Psoas muscle (tissue), 8 donors: ENCODE measurements at regions of chr19 and their contacts with region 1.

Region 1: GRCh38 chr19:44689056-44689895 is 9.7 kb upstream of the CEACAM16 start:
- DNase-seq: peak; percentile 73 to 86
- ATAC-seq: peak; percentile 59 to 77 (median 67)
- H3K4me3 ChIP-seq: no peak overlapping the region
- H3K27ac ChIP-seq: no peak overlapping the region
- H3K4me1 ChIP-seq: peaks cover 3% of the 10 kb centered on the region
- H3K27me3 ChIP-seq: no peaks in the 10 kb centered on the region
- CTCF ChIP-seq: peak; percentile 88

Region 2: DNA sequence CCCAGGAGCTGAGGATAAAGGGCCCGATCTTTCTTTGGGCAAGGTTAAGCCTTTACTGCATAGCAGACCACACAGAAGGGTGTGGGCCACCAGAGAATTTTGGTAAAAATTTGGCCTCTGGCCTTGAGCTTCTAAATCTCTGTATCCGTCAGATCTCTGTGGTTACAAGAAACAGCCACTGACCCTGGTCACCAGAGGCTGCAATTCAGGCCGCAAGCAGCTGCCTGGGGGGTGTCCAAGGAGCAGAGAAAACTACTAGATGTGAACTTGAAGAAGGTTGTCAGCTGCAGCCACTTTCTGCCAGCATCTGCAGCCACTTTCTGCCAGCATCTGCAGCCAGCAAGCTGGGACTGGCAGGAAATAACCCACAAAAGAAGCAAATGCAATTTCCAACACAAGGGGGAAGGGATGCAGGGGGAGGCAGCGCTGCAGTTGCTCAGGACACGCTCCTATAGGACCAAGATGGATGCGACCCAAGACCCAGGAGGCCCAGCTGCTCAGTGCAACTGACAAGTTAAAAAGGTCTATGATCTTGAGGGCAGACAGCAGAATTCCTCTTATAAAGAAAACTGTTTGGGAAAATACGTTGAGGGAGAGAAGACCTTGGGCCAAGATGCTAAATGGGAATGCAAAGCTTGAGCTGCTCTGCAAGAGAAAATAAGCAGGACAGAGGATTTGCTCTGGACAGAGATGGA is 26.4 kb before region 1 on chr19:
- intact Hi-C with region 1: no loop called
- DNase-seq: no peak
- ATAC-seq: no peak
- H3K4me3 ChIP-seq: no peak overlapping the region
- H3K27ac ChIP-seq: no peak overlapping the region
- H3K4me1 ChIP-seq: no peaks in the 10 kb centered on the region
- H3K27me3 ChIP-seq: no peaks in the 10 kb centered on the region
- CTCF ChIP-seq: no peak

Region 3: DNA sequence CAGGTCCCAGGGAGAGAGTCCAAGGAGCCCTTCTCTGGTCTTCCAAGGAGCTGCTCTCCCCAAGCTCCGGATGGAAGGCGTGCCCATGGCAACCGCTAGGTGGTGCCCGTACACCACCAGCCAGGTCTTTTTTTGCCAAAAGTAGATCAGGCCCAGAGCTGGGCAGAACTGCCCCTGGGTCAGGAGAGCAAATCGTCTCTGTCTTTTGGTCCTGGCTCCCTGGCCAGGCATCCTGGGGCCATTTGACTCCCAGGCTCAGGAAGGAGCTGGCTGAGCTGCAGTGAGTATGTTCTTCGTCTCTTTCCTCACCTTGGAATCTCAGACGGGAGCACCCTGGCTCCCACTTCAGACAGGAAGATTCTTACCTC is 34.7 kb after region 1 on chr19:
- intact Hi-C with region 1: loop called in 1 of 2 experiments (anchors 5 kb)
- DNase-seq: peak; percentile 84 to 90
- ATAC-seq: peak; percentile 91 to 98 (median 94)
- H3K4me3 ChIP-seq: no peak overlapping the region
- H3K27ac ChIP-seq: peak overlapping the region; percentile 62
- H3K4me1 ChIP-seq: peaks cover 6% of the 10 kb centered on the region
- H3K27me3 ChIP-seq: no peaks in the 10 kb centered on the region
- CTCF ChIP-seq: peak; percentile 100

Region 4: DNA sequence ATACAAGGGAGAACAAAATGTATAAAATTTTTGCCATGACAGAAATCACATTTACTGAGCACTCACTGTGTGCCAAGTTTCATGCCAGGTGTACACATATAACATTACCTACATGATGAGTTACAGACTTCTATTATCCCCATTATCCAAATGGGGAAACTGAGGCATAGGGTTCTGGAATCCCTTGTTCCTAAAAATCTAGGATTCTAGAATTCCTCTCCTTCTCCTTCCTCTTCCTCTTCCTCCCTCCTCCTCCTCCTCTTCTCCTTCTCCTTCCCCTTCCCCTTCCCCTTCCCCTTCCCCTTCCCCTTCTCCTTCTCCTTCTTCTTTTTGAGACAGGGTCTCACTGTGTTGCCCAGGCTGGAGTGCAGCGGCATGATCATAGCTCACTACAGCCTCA is 45.1 kb after region 1 on chr19:
- intact Hi-C with region 1: no loop called
- DNase-seq: no peak
- ATAC-seq: no peak
- H3K4me3 ChIP-seq: no peak overlapping the region
- H3K27ac ChIP-seq: no peak overlapping the region
- H3K4me1 ChIP-seq: peaks cover 7% of the 10 kb centered on the region
- H3K27me3 ChIP-seq: no peaks in the 10 kb centered on the region
- CTCF ChIP-seq: no peak